Naive thymus-derived CD8-positive, alpha-beta T cell (primary cell): ENCODE measurements at regions of chr5 and their contacts with region 1.

Region 1: DNA sequence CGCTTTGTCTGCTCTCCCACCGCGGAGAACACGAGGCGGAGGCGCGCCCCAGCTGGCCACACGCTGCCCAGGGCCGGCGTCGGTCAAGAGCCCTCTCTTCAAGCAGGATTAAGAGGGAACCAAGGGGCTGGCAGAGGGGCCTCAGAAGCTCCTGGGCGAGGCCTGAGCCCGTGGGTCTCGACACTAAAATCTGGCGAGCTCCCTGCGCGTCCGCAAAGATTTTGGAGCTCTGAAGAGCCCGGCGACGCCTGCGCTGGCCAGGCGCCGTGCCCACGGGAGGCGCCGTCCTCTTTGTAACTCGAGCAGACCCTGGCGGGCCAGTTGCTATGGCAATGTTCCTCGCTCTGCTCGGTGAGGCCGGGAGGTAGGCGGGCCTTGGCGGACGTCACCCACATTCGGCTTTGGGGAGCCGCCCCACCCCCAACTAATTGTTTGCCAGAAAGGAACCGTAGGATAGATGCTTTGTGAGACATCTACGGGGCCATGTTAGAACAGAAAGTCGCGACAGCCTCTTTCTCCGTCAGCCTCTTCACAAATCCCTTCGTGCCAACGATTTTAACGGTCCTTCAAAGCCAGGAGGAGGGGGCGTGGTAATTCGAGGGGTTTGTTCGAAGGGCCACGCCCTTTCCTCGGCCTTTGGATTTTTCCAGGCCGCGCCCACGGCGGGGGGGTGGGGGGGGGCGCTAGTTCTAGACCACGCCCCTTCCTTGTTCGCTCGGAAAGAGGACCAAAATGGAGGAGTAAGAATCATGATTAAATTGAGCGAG is 714 bp upstream of the CNOT8 start:
- DNase-seq: peak; percentile 73 to 97 (median 90)
- ATAC-seq: peak; percentile 64 to 69
- H3K4me3 Mint-ChIP-seq: peak overlapping the region; percentile 87 to 97 (median 95)
- H3K27ac Mint-ChIP-seq: peak overlapping the region; percentile 91 to 100 (median 99)
- H3K4me1 Mint-ChIP-seq: peaks cover 26 to 42% (median 38%) of the 10 kb centered on the region in 4 donors
- H3K27me3 Mint-ChIP-seq: no peaks in the 10 kb centered on the region

Region 2: DNA sequence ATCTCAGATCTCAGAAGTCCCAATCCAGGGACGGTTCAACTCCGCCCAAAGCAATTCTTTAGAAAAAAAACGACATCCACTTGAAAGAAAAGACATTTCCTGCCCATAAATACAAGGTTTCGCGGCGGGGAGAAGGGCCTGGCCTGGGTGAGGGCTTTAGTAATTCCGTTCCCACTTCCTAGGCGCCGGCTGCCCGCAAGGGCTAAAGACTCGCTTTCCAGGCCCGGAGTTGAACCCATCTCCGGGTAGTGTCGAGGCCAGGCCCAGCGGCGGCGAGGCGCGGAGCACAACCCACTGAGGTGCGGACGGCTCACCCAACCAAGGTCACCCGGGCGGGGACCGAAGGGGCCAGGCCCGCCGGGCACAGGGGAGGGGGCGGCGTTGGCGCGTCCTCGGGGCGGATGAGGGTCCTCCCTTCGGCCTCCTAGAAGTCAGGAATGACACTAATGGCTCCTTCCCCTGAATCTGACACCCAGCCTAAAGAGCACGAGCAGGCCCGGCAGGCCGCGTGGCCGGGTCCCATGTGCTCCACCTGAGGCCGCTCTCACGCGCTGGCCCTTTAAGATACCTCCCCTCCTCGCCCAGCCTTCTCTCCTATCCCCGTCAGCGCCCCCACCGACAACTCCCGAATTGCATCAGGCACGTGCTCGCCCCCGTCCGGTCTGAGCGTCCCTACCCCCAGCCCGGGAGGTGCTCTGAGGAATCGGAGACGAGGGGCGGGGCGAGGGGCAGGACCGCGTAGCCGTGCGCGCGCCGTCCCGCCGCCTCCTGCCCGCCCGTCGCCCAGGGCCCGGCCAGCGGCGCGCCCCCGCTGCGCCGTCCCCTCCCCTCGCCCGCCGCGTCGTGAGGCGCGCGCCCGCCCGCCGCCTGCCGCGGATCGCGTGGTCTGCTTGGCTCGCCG is 103.0 kb before region 1 on chr5:
- POLR2A ChIA-PET with region 1: interaction called, 12 read pairs
- DNase-seq: peak; percentile 96 to 100 (median 99)
- ATAC-seq: peak; percentile 84 to 92
- H3K4me3 Mint-ChIP-seq: peak overlapping the region; percentile 83 to 94 (median 92)
- H3K27ac Mint-ChIP-seq: peak overlapping the region; percentile 92 to 99 (median 98)
- H3K4me1 Mint-ChIP-seq: peaks cover 25 to 46% (median 38%) of the 10 kb centered on the region in 4 donors
- H3K27me3 Mint-ChIP-seq: no peaks in the 10 kb centered on the region

Region 3: GRCh38 chr5:154783774-154784460 is 73.8 kb before region 1 on chr5:
- POLR2A ChIA-PET with region 1: no interaction called
- DNase-seq: no peak
- ATAC-seq: peak in 1 of 2 donors; percentile 22
- H3K4me3 Mint-ChIP-seq: peak overlapping the region in 7 of 10 donors; percentile 4 to 73 (median 33)
- H3K27ac Mint-ChIP-seq: peak overlapping the region in 9 of 10 donors; percentile 30 to 90 (median 71)
- H3K4me1 Mint-ChIP-seq: peaks cover 62 to 99% (median 98%) of the 10 kb centered on the region in 4 donors
- H3K27me3 Mint-ChIP-seq: no peaks in the 10 kb centered on the region

Region 4: DNA sequence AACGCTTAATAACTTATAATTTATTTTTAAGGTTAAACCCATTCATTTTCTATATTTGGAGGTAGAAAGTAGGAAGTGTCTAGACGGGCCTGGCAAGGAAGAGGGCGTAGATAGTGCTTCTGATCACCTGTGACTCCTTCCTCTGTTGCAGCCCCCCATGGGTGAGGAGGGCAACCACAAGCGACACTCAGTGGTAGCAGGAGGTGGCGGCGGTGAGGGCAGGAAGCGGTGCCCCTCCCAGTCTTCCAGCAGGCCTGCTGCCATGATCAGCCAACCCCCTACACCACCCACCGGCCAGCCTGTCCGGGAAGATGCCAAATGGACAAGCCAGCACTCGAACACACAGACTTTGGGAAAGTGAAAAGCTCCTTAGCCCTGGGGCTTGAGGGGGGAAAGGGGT is 44.0 kb before region 1 on chr5:
- POLR2A ChIA-PET with region 1: interaction called, 13 read pairs
- DNase-seq: peak; percentile 24 to 86 (median 66)
- ATAC-seq: peak; percentile 95 to 99
- H3K4me3 Mint-ChIP-seq: peak overlapping the region in 8 of 10 donors; percentile 30 to 76 (median 54)
- H3K27ac Mint-ChIP-seq: peak overlapping the region; percentile 9 to 96 (median 92)
- H3K4me1 Mint-ChIP-seq: peaks cover 24 to 55% (median 39%) of the 10 kb centered on the region in 4 donors
- H3K27me3 Mint-ChIP-seq: no peaks in the 10 kb centered on the region

Region 5: GRCh38 chr5:154868702-154869101 is 11.0 kb after region 1 on chr5:
- POLR2A ChIA-PET with region 1: no interaction called
- DNase-seq: peak in 4 of 10 donors; percentile 3 to 67 (median 32)
- ATAC-seq: peak; percentile 53 to 60
- H3K4me3 Mint-ChIP-seq: peak overlapping the region in 1 of 10 donors; percentile 32
- H3K27ac Mint-ChIP-seq: peak overlapping the region in 6 of 10 donors; percentile 15 to 59 (median 45)
- H3K4me1 Mint-ChIP-seq: peaks cover 5 to 32% (median 17%) of the 10 kb centered on the region in 4 donors
- H3K27me3 Mint-ChIP-seq: no peaks in the 10 kb centered on the region